ENCODE measurements at regions of chr18 and their contacts with region 1.

Region 1: GRCh38 chr18:3245853-3246634 is 1.6 kb upstream of the MYL12A start:
- DNase-seq: peak; percentile 70 to 81 (median 73)
- H3K4me3 ChIP-seq: peak overlapping the region; percentile 76 to 86
- H3K4me3 Mint-ChIP-seq: peak overlapping the region; percentile 93 to 98 (median 96)
- H3K27ac ChIP-seq: peak overlapping the region; percentile 85
- H3K27ac Mint-ChIP-seq: peak overlapping the region; percentile 80 to 99 (median 96)
- H3K4me1 ChIP-seq: peaks cover 32% of the 10 kb centered on the region
- H3K4me1 Mint-ChIP-seq: peaks cover 19 to 52% (median 30%) of the 10 kb centered on the region in 4 donors
- H3K27me3 ChIP-seq: no peaks in the 10 kb centered on the region
- H3K27me3 Mint-ChIP-seq: no peaks in the 10 kb centered on the region

Region 2: DNA sequence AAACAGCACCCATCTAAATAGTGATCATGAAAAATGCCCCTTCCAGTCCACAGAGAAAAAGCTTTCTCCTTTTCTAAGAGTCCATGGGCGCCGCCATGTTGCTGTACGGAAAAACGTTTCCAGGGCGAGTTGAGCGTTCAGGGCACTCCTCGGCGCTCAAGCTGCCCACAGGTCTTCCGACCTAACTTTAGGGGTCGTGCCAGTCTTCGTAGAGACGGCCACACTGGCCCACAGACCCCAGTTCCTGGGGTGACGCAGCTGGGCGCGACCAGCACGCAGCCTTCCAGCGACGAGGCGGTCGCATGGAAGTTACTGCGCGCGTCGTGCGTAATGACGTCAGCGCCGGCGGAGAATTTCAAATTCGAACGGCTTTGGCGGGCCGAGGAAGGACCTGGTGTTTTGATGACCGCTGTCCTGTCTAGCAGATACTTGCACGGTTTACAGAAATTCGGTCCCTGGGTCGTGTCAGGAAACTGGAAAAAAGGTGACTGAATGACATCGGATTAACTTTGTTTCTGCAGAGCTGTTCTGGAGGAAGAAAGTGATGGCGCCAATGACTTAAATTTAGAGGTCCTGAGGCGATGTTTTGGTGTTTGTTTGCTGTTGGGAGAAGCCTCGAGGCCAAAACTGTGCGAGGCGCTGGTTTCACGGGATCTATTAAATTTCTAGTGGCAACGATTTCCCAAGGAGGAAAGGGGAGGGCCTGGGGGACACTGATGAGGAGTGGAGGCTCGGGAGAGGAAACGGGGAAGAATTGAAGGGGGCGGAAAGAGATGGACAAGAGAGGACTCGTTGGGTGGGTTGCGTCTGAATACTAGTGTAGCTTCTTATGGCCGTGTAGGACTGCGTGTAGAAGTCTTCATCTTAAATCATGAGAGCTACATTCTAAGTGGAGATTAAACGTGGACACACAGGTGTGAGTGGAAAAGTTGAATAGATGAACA is 674.6 kb before region 1 on chr18 and contains the starts of genes METTL4 and NDC80:
- CTCF ChIA-PET with region 1: no interaction called
- POLR2A ChIA-PET with region 1: no interaction called
- intact Hi-C with region 1: loop called (anchors 2 kb)
- DNase-seq: peak; percentile 84 to 91 (median 85)
- H3K4me3 ChIP-seq: peak within 1 kb of the TSS; percentile 80 to 88
- H3K4me3 Mint-ChIP-seq: peak within 1 kb of the TSS; percentile 99 to 100 (median 100)
- H3K27ac ChIP-seq: peak within 1 kb of the TSS; percentile 99
- H3K27ac Mint-ChIP-seq: peak within 1 kb of the TSS; percentile 99 to 100 (median 100)
- H3K4me1 ChIP-seq: peaks cover 44% of the 10 kb centered on the region
- H3K4me1 Mint-ChIP-seq: peaks cover 42 to 74% (median 56%) of the 10 kb centered on the region in 4 donors
- H3K27me3 ChIP-seq: no peaks in the 10 kb centered on the region
- H3K27me3 Mint-ChIP-seq: no peaks in the 10 kb centered on the region
- total RNA-seq, gene METTL4: 25.8 to 29.3 TPM
- total RNA-seq, gene NDC80: 3.8 to 6.2 TPM

Region 3: GRCh38 chr18:2958819-2959298 is 287.2 kb before region 1 on chr18:
- CTCF ChIA-PET with region 1: interaction called, 3 read pairs
- POLR2A ChIA-PET with region 1: interaction called, 36 read pairs
- intact Hi-C with region 1: no loop called
- DNase-seq: peak in 2 of 5 donors; percentile 37 to 64
- H3K4me3 ChIP-seq: peak overlapping the region in 1 of 2 donors; percentile 9
- H3K4me3 Mint-ChIP-seq: peak overlapping the region; percentile 4 to 89 (median 73)
- H3K27ac ChIP-seq: peak overlapping the region; percentile 79
- H3K27ac Mint-ChIP-seq: peak overlapping the region; percentile 88 to 99 (median 98)
- H3K4me1 ChIP-seq: peaks cover 95% of the 10 kb centered on the region
- H3K4me1 Mint-ChIP-seq: peaks cover 68 to 97% (median 85%) of the 10 kb centered on the region in 4 donors
- H3K27me3 ChIP-seq: no peaks in the 10 kb centered on the region
- H3K27me3 Mint-ChIP-seq: no peaks in the 10 kb centered on the region

Region 4: GRCh38 chr18:2994603-2995432 is 251.2 kb before region 1 on chr18:
- CTCF ChIA-PET with region 1: interaction called, 81 read pairs
- POLR2A ChIA-PET with region 1: interaction called, 49 read pairs
- intact Hi-C with region 1: loop called (anchors 1 kb)
- DNase-seq: peak; percentile 75 to 84 (median 79)
- H3K4me3 ChIP-seq: peak overlapping the region in 1 of 2 donors; percentile 29
- H3K4me3 Mint-ChIP-seq: peak overlapping the region; percentile 53 to 81 (median 68)
- H3K27ac ChIP-seq: peak overlapping the region; percentile 28
- H3K27ac Mint-ChIP-seq: peak overlapping the region; percentile 61 to 94 (median 90)
- H3K4me1 ChIP-seq: peaks cover 62% of the 10 kb centered on the region
- H3K4me1 Mint-ChIP-seq: peaks cover 57 to 87% (median 73%) of the 10 kb centered on the region in 4 donors
- H3K27me3 ChIP-seq: no peaks in the 10 kb centered on the region
- H3K27me3 Mint-ChIP-seq: no peaks in the 10 kb centered on the region

Region 5: DNA sequence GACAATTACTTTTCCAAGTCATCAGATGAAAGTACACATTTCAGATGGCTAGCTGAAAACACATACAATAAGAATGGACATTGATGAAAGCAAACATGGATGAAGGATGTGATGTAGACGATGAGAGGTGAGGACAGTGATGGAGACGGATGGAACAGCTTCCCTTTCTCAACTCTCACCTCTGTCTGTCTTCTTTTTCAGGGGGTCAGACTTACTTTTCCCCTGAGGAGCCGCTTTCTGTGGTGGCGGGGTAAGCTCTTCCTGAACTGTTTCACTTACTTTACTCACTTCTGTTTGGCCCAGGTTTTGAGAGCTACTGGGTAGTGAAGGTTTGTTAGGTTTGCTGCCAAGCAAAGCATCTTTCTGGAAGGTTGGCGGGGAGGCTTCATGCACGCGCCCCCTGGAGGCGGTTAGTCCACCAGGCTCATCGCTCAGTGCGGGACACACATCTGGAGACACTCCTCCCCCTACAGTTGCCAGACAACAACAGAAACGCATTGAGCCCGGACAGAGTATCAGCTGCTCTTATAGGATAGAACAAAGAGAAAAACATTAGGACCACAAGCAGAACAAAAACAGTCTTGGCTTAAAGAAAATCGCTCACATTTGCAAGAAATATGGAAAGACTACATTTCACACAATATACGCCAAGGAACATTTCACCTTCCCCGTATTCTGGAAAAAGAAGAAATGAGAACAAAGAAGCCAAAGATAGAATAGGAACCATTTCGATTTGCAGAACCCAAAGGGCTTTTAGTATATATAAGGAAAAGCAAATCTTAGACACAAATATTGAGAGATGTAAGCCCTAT is 116.8 kb before region 1 on chr18:
- CTCF ChIA-PET with region 1: interaction called, 40 read pairs
- POLR2A ChIA-PET with region 1: interaction called, 10 read pairs
- intact Hi-C with region 1: no loop called
- DNase-seq: peak; percentile 71 to 78 (median 76)
- H3K4me3 ChIP-seq: no peak overlapping the region
- H3K4me3 Mint-ChIP-seq: peak overlapping the region in 2 of 8 donors; percentile 35 to 57
- H3K27ac ChIP-seq: no peak overlapping the region
- H3K27ac Mint-ChIP-seq: peak overlapping the region in 5 of 7 donors; percentile 0 to 64 (median 32)
- H3K4me1 ChIP-seq: peaks cover 7% of the 10 kb centered on the region
- H3K4me1 Mint-ChIP-seq: peaks cover 4 to 11% (median 9%) of the 10 kb centered on the region in 4 donors
- H3K27me3 ChIP-seq: no peaks in the 10 kb centered on the region
- H3K27me3 Mint-ChIP-seq: no peaks in the 10 kb centered on the region

Region 6: GRCh38 chr18:3297025-3297984 is 51.3 kb after region 1 on chr18:
- CTCF ChIA-PET with region 1: interaction called, 16 read pairs
- POLR2A ChIA-PET with region 1: interaction called, 10 read pairs
- intact Hi-C with region 1: loop called (anchors 1 kb)
- DNase-seq: peak; percentile 88 to 95 (median 90)
- H3K4me3 ChIP-seq: peak overlapping the region; percentile 71 to 86
- H3K4me3 Mint-ChIP-seq: peak overlapping the region; percentile 91 to 98 (median 94)
- H3K27ac ChIP-seq: peak overlapping the region; percentile 44
- H3K27ac Mint-ChIP-seq: peak overlapping the region; percentile 51 to 96 (median 90)
- H3K4me1 ChIP-seq: peaks cover 9% of the 10 kb centered on the region
- H3K4me1 Mint-ChIP-seq: peaks cover 2 to 15% (median 10%) of the 10 kb centered on the region in 4 donors
- H3K27me3 ChIP-seq: no peaks in the 10 kb centered on the region
- H3K27me3 Mint-ChIP-seq: peaks cover 8 to 13% of the 10 kb centered on the region in 2 donors

Measured in CD4-positive, alpha-beta memory T cell (primary cell).